ENCODE measurements at regions of chr1 and their contacts with region 1.

Region 1: GRCh38 chr1:171545523-171545922 is 60.2 kb downstream of the PRRC2C start:
- DNase-seq: no peak
- H3K4me3 Mint-ChIP-seq: no peak overlapping the region
- H3K27ac Mint-ChIP-seq: no peak overlapping the region
- H3K4me1 Mint-ChIP-seq: peaks cover 15% of the 10 kb centered on the region
- H3K27me3 Mint-ChIP-seq: no peaks in the 10 kb centered on the region

Region 2: DNA sequence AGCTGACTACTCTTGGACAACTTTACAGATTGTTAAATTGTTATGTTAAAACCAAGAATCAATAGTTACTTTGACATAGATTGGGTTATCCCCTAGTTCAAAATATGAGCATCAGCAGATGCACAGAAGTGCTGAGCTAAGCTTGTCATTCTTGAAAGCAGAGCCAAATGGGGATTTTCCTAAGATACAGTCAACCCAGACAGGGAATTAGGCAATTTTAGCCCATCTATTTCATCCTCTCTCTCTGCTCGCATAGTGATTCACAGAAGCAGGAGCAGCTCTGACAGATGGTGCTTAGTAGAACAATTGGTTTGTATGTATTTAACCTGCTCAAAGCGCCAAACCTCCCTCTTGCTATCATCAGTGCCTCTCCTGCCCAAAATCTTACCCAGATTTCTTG is 88.1 kb before region 1 on chr1:
- intact Hi-C with region 1: no loop called
- DNase-seq: no peak
- H3K4me3 Mint-ChIP-seq: no peak overlapping the region
- H3K27ac Mint-ChIP-seq: no peak overlapping the region
- H3K4me1 Mint-ChIP-seq: no peaks in the 10 kb centered on the region
- H3K27me3 Mint-ChIP-seq: peaks cover 2% of the 10 kb centered on the region

Region 3: DNA sequence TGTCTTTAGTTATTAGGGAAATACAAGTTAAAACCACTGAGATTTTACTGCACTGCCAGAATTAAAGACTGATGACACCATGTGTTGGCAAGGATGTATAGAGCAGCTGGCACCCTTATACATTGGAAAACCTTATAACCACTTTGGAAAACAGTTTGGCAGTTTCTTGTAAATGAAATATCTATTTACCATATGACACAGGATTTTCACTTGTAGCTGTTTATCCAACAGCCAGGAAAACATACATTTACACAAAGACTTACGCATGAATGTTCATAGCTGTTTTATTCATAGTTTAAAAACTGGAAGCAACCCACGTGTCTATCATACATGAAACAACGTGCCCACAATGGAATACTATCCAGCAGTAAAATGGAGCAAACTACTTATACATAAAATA is 14.8 kb before region 1 on chr1:
- intact Hi-C with region 1: loop called (anchors 2 kb)
- DNase-seq: no peak
- H3K4me3 Mint-ChIP-seq: no peak overlapping the region
- H3K27ac Mint-ChIP-seq: no peak overlapping the region
- H3K4me1 Mint-ChIP-seq: peaks cover 6% of the 10 kb centered on the region
- H3K27me3 Mint-ChIP-seq: no peaks in the 10 kb centered on the region

Region 4: GRCh38 chr1:171566467-171566866 is 20.9 kb after region 1 on chr1:
- intact Hi-C with region 1: loop called (anchors 2 kb)
- DNase-seq: no peak
- H3K4me3 Mint-ChIP-seq: no peak overlapping the region
- H3K27ac Mint-ChIP-seq: no peak overlapping the region
- H3K4me1 Mint-ChIP-seq: peaks cover 5% of the 10 kb centered on the region
- H3K27me3 Mint-ChIP-seq: no peaks in the 10 kb centered on the region

Region 5: GRCh38 chr1:171583581-171584201 is 38.2 kb after region 1 on chr1:
- intact Hi-C with region 1: loop called (anchors 5 kb)
- DNase-seq: no peak
- H3K4me3 Mint-ChIP-seq: no peak overlapping the region
- H3K27ac Mint-ChIP-seq: peak overlapping the region; percentile 3
- H3K4me1 Mint-ChIP-seq: peaks cover 38% of the 10 kb centered on the region
- H3K27me3 Mint-ChIP-seq: no peaks in the 10 kb centered on the region

Region 6: DNA sequence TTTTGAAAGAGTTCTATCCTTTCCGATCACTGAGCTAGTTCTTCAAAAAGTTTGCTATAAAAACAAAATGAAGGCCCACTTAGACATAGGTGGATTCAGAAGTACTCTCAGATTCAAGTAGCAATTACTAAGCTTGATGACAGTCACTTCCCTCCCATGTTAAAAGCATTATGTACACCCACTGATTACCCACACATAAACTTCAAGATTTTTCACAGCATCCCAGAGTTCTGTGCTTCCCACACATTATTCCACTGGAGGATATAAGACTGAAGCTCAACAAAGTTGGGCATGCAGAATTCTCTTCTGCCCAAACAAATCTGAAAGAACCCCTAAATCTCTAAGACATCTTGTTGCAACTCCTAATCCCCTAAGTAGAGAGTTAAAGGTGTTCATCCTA is 166.8 kb after region 1 on chr1:
- intact Hi-C with region 1: no loop called
- DNase-seq: no peak
- H3K4me3 Mint-ChIP-seq: no peak overlapping the region
- H3K27ac Mint-ChIP-seq: no peak overlapping the region
- H3K4me1 Mint-ChIP-seq: peaks cover 8% of the 10 kb centered on the region
- H3K27me3 Mint-ChIP-seq: no peaks in the 10 kb centered on the region